ENCODE measurements at regions of chr19 and their contacts with region 1.

Region 1: DNA sequence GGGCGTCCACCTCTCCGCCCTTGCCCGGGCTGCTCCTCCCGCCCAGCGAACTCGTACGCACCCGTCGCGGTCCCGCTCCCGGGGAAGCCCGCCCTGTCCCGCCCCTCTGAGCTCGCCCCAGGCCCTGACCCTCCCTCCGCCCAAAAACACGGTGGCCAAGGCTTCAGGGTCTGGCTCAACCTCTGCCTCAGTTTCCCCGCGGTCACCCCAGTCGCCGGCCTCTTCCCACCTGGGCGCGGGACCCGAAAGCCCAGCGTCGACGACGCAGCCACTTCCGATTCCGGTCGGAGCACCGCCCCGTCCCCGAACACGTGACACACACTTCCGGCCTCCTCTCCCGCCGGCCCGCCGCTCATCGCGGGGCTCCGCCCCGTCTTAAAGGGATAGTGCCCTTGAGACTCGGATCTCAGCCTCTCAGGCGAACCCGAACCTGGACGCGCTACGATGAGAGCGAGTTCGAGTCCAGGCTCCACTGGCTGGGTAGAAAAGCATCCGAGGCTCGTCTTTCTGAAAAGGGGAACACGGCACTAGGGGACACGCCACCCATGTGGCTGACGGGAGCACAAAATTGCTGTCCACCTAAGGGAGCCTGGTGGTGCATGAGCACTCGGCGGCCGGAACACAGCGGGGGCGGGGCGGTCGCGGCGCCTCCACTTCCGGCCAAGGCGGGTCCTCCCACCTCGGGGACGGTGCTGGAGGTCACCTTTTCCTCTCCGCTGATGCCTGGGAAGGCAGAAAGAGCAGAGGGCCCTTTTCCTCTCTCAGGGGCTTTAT is at the start of gene C19orf25:
- DNase-seq: peak; percentile 73 to 96
- H3K4me3 ChIP-seq: peak within 1 kb of the TSS; percentile 88 to 90
- H3K27ac ChIP-seq: peak within 1 kb of the TSS; percentile 41 to 62
- H3K4me1 ChIP-seq: peaks cover 2 to 14% of the 10 kb centered on the region in 2 donors
- H3K27me3 ChIP-seq: no peaks in the 10 kb centered on the region
- CTCF ChIP-seq: no peak
- total RNA-seq, gene C19orf25: 32.7 TPM

Region 2: GRCh38 chr19:1490311-1491113 is 11.4 kb after region 1 on chr19 and contains the start of gene PCSK4:
- intact Hi-C with region 1: loop called (anchors 1 kb)
- DNase-seq: peak; percentile 95 to 99
- H3K4me3 ChIP-seq: peak within 1 kb of the TSS; percentile 64 to 82
- H3K27ac ChIP-seq: peak within 1 kb of the TSS; percentile 22 to 67
- H3K4me1 ChIP-seq: peaks cover 8 to 14% of the 10 kb centered on the region in 2 donors
- H3K27me3 ChIP-seq: no peaks in the 10 kb centered on the region
- CTCF ChIP-seq: peak in 1 of 3 experiments; percentile 5
- total RNA-seq, gene PCSK4: 1.5 TPM

Region 3: DNA sequence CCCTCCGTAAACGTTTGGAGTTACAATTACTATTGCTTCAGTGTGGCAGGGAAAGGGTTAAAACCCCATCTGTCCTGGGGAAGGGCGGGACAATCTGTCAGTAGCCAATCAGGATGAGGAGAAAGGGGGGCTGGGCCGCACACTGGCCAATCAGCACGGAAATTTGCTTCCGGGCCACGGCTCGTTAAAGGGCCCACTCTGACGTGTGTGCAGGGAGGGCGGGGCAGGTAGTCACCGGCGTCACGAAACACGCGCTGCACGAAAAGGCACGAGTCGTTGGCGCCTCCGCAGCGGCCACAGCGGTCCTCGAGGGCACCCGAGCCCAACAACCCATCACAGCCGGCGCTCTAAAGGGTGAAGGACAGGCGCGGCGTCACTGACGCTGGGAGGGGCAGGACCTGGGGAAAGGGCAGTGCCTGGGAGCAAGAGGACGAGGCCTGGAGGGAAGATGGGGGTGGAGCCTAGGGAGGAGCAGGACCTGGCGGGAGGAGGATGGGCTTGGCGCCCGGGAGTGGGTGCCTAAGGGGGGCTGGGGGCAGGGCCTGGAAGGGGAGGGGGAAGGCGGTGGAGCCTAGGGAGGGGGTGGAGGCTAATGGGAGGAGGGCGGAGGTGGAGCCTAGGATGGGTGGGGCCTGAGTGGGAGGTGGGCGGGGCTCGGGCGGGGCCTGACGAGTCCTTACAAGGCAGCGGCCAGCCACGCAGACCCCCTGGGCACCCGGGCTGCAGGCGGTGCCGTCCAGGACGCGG is 28.8 kb after region 1 on chr19:
- intact Hi-C with region 1: loop called (anchors 1 kb)
- DNase-seq: peak; percentile 70 to 95
- H3K4me3 ChIP-seq: peak overlapping the region; percentile 14 to 66
- H3K27ac ChIP-seq: peak overlapping the region; percentile 83 to 96
- H3K4me1 ChIP-seq: peaks cover 6 to 15% of the 10 kb centered on the region in 2 donors
- H3K27me3 ChIP-seq: peaks cover 12% of the 10 kb centered on the region
- CTCF ChIP-seq: no peak

Region 4: DNA sequence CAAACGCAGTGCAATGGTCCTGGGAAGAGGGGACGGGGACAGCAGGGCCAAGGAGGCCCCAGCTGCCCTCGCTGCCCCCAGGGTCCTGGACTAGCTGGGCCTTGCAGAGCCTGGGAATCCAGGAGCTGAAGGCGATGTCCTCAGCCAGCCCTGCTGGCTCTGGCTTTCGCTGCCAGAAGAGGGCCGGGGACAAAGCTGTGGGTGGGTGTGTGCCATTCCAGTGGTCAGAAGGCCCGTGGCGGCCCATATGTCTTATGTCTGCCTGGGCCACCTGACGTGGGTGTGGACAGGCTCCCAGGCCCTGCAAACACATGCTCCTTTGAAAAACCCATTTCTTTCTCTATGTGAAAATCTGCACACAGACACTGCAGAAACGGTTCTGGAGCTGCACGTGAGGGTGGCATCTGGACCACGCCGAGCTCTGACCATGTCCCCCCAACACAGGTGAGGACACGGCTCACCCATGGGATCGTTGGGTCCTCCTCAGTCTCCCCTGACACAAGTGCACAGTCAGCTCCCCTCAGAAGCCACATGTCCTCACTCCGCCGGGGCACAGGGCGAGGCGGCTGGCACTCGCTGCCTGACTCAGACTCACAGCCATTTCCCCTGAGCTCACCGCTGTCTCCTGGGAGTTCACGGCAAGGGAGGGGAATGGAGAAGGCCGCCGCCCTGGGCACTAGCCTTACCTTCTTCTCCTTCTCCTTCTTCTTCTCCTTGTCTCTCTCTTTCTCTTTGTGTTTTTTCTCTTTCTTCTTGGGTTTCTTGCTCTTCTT is 634.5 kb after region 1 on chr19:
- intact Hi-C with region 1: no loop called
- DNase-seq: no peak
- H3K4me3 ChIP-seq: no peak overlapping the region
- H3K27ac ChIP-seq: peak overlapping the region; percentile 34 to 62
- H3K4me1 ChIP-seq: no peaks in the 10 kb centered on the region
- H3K27me3 ChIP-seq: no peaks in the 10 kb centered on the region
- CTCF ChIP-seq: no peak

Measured in ascending aorta (tissue), 2 donors.